Panc1 (cell line): ENCODE measurements at regions of chr3 and their contacts with region 1.

Region 1: DNA sequence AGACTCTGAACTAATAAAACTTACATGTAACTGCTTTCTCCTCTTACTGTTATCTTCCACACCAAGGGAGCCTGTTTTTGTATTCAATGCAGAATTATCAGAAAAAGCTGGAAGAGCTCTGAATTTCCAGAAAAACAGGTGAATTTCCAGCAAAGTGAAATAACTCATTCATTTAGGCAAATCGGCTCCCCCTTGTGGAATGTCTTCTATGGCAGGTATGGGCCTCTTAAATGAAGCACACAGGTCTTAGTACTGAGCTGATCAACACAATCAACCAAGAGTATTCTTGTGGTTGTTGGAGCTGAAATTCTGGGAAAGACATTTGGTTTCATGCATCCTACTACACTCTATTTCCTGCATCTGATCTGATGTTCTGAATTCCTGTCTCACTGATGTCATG is 31.0 kb upstream of the PTPRG start:
- DNase-seq: no peak
- ATAC-seq: no peak
- H3K4me3 ChIP-seq: no peak overlapping the region
- H3K27ac ChIP-seq: no peak overlapping the region
- H3K4me1 ChIP-seq: no peaks in the 10 kb centered on the region
- H3K27me3 ChIP-seq: no peaks in the 10 kb centered on the region
- CTCF ChIP-seq: peak; percentile 46

Region 2: GRCh38 chr3:61221759-61222362 is 308.5 kb before region 1 on chr3:
- CTCF ChIA-PET with region 1: no interaction called
- POLR2A ChIA-PET with region 1: no interaction called
- in situ Hi-C with region 1: no loop called
- intact Hi-C with region 1: no loop called
- DNase-seq: no peak
- ATAC-seq: no peak
- H3K4me3 ChIP-seq: no peak overlapping the region
- H3K27ac ChIP-seq: no peak overlapping the region
- H3K4me1 ChIP-seq: no peaks in the 10 kb centered on the region
- H3K27me3 ChIP-seq: no peaks in the 10 kb centered on the region
- CTCF ChIP-seq: no peak

Region 3: GRCh38 chr3:61650719-61651410 is 120.5 kb after region 1 on chr3:
- CTCF ChIA-PET with region 1: no interaction called
- POLR2A ChIA-PET with region 1: interaction called, 11 read pairs
- in situ Hi-C with region 1: no loop called
- intact Hi-C with region 1: no loop called
- DNase-seq: no peak
- ATAC-seq: no peak
- H3K4me3 ChIP-seq: no peak overlapping the region
- H3K27ac ChIP-seq: no peak overlapping the region
- H3K4me1 ChIP-seq: no peaks in the 10 kb centered on the region
- H3K27me3 ChIP-seq: no peaks in the 10 kb centered on the region
- CTCF ChIP-seq: no peak

Region 4: DNA sequence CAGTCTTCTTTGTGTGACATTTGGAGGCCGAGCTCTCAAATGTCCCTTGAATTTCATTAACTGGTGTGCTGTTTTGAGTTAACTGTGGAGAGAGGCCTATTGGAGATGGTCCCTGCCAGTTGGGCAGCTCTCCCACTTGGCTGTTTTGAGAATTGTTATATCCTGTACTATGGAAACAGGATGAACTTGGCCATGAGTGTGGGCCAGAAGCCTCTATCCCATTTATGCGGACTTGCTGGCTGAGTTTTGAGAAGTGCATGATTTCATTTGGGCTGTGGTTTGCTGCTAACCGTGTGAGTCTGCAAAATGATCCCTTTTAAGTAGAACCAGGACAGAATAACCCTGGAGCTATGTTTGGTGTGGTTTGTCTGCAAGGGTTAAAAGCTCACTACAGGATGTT is 397.0 kb after region 1 on chr3:
- CTCF ChIA-PET with region 1: no interaction called
- POLR2A ChIA-PET with region 1: no interaction called
- in situ Hi-C with region 1: no loop called
- intact Hi-C with region 1: no loop called
- DNase-seq: no peak
- ATAC-seq: no peak
- H3K4me3 ChIP-seq: no peak overlapping the region
- H3K27ac ChIP-seq: no peak overlapping the region
- H3K4me1 ChIP-seq: no peaks in the 10 kb centered on the region
- H3K27me3 ChIP-seq: no peaks in the 10 kb centered on the region
- CTCF ChIP-seq: no peak